ENCODE measurements at regions of chr4 and their contacts with region 1.

Region 1: DNA sequence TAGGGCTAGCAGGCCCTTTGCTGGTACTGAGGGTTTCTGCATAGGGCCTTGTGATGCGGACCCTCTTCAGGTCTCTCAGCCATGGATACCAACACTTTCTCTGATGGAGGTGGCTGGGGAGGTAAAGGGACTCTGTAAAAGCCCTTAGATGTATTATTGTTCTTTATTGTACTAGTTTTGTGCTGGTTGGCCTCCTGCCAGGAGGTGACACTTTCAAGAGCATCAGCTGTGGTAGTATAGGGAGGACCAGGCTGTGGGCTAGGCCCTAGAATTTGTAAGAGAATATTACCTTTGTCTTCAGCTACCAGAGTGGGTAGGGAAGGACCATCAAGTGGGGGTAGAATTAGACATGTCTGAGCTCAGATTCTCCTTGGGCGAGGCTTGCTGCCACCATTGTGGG is 936.3 kb downstream of the CENPC start:
- DNase-seq: no peak
- H3K4me3 ChIP-seq: no peak overlapping the region
- H3K27ac ChIP-seq: no peak overlapping the region
- H3K4me1 ChIP-seq: no peaks in the 10 kb centered on the region
- H3K27me3 ChIP-seq: no peaks in the 10 kb centered on the region
- CTCF ChIP-seq: no peak

Region 2: GRCh38 chr4:66590488-66591215 is 18.4 kb before region 1 on chr4:
- CTCF ChIA-PET with region 1: interaction called, 11 read pairs
- dilution Hi-C with region 1: no loop called
- in situ Hi-C with region 1: no loop called
- intact Hi-C with region 1: no loop called
- DNase-seq: no peak
- H3K4me3 ChIP-seq: no peak overlapping the region
- H3K27ac ChIP-seq: no peak overlapping the region
- H3K4me1 ChIP-seq: no peaks in the 10 kb centered on the region
- H3K27me3 ChIP-seq: no peaks in the 10 kb centered on the region
- CTCF ChIP-seq: no peak